Dorsolateral prefrontal cortex (tissue), 120 donors: ENCODE measurements at regions of chr4 and their contacts with region 1.

Region 1: GRCh38 chr4:164956766-164957643 is 20.5 kb downstream of the TRIM61 start:
- DNase-seq: peak; percentile 72 to 92 (median 88)
- H3K4me3 ChIP-seq: peak overlapping the region; percentile 52 to 93 (median 77)
- H3K27ac ChIP-seq: peak overlapping the region in 56 of 59 donors; percentile 25 to 91 (median 79)
- H3K27me3 ChIP-seq: peaks cover 0 to 6% (median 0%) of the 10 kb centered on the region in 45 donors
- CTCF ChIP-seq: peak in 20 of 56 donors; percentile 3 to 41 (median 18)

Region 2: DNA sequence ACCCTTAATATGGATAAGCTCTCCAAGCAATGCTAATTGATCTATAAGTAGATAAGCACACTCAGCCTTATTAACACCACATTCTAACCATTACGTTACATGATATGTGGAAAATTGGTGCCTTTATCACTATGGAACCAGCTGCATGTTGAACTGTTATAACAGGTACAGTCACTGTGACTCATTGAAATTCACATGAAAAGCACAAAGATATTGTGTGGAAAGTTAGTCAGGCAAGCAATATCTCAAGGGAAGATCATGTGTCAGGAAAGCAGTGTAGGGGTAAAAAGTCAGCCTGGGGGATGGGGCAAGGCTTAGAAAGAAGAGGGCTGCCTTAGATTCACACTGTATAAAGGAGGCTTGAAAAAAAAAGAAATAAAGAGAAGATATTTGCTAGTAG is 516.8 kb before region 1 on chr4:
- intact Hi-C with region 1: no loop called
- DNase-seq: no peak
- H3K4me3 ChIP-seq: no peak overlapping the region
- H3K27ac ChIP-seq: no peak overlapping the region
- H3K27me3 ChIP-seq: no peaks in the 10 kb centered on the region
- CTCF ChIP-seq: no peak

Region 3: GRCh38 chr4:164997324-164997723 is 40.3 kb after region 1 on chr4:
- intact Hi-C with region 1: loop called in 1 of 2 experiments (anchors 1 kb)
- DNase-seq: no peak
- H3K4me3 ChIP-seq: peak overlapping the region in 2 of 59 donors; percentile 2 to 52
- H3K27ac ChIP-seq: peak overlapping the region in 53 of 59 donors; percentile 1 to 95 (median 83)
- H3K27me3 ChIP-seq: peaks cover 0 to 3% (median 0%) of the 10 kb centered on the region in 45 donors
- CTCF ChIP-seq: peak in 25 of 56 donors; percentile 11 to 54 (median 32)

Region 4: DNA sequence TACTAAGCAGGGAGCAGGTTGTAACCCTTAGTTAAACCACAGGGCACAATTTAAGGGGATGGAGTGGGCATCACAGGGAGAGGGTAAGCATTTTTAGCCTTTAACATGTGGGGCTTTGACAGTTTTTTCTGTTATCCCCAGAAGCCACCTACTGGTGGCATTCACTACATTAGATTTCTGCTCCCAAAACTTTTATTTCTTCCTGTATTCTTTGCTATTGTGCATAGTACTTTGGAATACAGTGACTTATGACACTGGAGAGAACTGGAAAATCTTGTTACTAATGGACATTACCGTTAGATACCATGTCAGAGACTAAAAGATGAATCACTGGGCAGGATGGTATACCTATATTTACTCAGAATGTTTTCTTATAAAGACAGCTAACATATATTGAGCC is 103.9 kb after region 1 on chr4:
- intact Hi-C with region 1: loop called in 1 of 2 experiments (anchors 10 kb)
- DNase-seq: no peak
- H3K4me3 ChIP-seq: no peak overlapping the region
- H3K27ac ChIP-seq: no peak overlapping the region
- H3K27me3 ChIP-seq: no peaks in the 10 kb centered on the region
- CTCF ChIP-seq: peak in 55 of 56 donors; percentile 18 to 65 (median 48)

Region 5: GRCh38 chr4:165106518-165106917 is 149.5 kb after region 1 on chr4:
- intact Hi-C with region 1: loop called in 1 of 2 experiments (anchors 10 kb)
- DNase-seq: no peak
- H3K4me3 ChIP-seq: no peak overlapping the region
- H3K27ac ChIP-seq: peak overlapping the region in 5 of 59 donors; percentile 18 to 62 (median 34)
- H3K27me3 ChIP-seq: no peaks in the 10 kb centered on the region
- CTCF ChIP-seq: no peak

Region 6: DNA sequence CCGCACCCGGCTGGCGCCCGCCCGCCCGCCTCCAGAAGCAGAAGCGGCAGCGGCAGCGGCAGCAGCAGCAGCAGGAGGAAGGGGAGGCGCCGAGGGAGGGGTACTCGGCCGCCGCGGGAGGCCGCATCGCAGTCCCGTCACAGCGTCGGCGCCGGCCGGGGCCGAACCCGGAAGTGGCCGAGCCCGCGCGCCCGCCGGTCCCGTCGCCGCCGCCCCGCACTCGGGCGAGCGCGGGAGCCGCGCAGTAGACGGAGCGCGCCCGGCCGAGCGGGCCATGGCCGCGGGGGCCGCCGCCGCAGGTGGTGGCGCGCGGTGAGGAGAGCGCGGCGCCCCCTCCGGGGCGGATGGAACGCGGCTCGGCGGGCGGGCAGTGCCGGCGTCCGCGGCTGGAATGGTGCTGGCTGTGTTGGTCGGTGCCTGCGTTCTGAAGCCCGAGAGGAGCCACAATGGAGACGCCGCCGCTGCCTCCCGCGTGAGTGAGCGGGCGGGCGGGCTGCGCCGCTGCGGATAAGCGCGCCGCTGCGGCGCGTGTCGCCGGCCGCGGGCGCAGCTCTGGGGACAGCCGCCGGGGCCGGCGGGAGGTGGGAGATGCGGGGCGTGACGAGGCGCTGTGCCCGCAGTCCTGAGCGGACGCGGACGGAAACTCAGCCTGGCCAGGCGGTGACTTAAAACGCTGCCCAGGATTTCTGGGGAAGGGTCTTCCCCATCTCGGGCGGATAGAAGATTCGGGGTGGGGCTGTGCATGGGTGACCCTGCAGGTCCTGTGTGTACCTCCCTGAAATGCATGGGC is 250.6 kb after region 1 on chr4 and contains the start of gene KLHL2:
- intact Hi-C with region 1: no loop called
- DNase-seq: peak; percentile 24 to 89 (median 72)
- H3K4me3 ChIP-seq: peak within 1 kb of the TSS; percentile 59 to 98 (median 88)
- H3K27ac ChIP-seq: peak within 1 kb of the TSS; percentile 70 to 97 (median 92)
- H3K27me3 ChIP-seq: no peaks in the 10 kb centered on the region
- CTCF ChIP-seq: peak in 5 of 56 donors; percentile 6 to 28 (median 10)
- total RNA-seq, gene KLHL2: 46.9 to 127 (median 90.7) TPM